Gastrocnemius medialis (tissue), 4 donors: ENCODE measurements at regions of chr1 and their contacts with region 1.

Region 1: GRCh38 chr1:8848663-8849386 is 29.7 kb downstream of the ENO1 start:
- DNase-seq: peak; percentile 89 to 97
- ATAC-seq: peak; percentile 92 to 96
- H3K4me3 ChIP-seq: no peak overlapping the region
- H3K27ac ChIP-seq: peak overlapping the region; percentile 73 to 85 (median 80)
- H3K4me1 ChIP-seq: peaks cover 24 to 29% of the 10 kb centered on the region in 2 donors
- H3K27me3 ChIP-seq: no peaks in the 10 kb centered on the region
- CTCF ChIP-seq: peak; percentile 92 to 98 (median 96)
- POLR2A ChIP-seq: peak in 1 of 2 donors; percentile 23

Region 2: DNA sequence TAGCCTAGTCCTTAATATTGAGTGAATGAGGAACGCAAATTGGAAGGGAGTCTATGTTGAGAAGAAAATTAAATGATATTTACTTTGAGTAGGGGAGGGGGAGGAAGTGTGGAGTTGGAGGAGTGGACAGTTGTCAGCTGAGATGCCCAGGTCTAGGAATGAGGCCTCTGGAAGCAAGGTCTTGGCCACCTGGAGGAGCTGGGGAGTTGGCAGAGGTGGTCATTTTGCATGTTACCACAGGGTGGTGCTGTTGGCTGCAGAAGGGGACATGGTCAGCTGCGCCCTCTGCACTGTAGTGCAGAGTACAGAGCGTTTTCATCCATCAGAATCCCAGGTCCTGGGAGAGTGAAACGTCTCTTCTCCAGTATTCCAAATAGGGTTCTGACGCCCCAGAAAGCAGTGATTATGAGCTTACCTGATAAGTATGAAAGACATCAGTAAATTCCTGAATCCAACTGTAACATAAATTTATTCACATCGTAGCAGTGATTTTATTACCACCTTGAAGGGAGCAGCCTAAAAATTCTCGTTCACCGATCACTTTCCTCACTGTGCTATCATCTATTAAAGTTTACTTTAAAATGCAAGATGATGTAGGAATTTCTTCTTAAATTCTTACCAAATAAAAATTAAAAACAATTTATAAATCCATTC is 873.5 kb before region 1 on chr1:
- in situ Hi-C with region 1: no loop called
- intact Hi-C with region 1: loop called (anchors 2 kb)
- DNase-seq: peak; percentile 61 to 77
- ATAC-seq: peak; percentile 91 to 98
- H3K4me3 ChIP-seq: no peak overlapping the region
- H3K27ac ChIP-seq: peak overlapping the region; percentile 51 to 85 (median 68)
- H3K4me1 ChIP-seq: peaks cover 17 to 30% of the 10 kb centered on the region in 2 donors
- H3K27me3 ChIP-seq: no peaks in the 10 kb centered on the region
- CTCF ChIP-seq: peak; percentile 82 to 92 (median 88)
- POLR2A ChIP-seq: no peak

Region 3: DNA sequence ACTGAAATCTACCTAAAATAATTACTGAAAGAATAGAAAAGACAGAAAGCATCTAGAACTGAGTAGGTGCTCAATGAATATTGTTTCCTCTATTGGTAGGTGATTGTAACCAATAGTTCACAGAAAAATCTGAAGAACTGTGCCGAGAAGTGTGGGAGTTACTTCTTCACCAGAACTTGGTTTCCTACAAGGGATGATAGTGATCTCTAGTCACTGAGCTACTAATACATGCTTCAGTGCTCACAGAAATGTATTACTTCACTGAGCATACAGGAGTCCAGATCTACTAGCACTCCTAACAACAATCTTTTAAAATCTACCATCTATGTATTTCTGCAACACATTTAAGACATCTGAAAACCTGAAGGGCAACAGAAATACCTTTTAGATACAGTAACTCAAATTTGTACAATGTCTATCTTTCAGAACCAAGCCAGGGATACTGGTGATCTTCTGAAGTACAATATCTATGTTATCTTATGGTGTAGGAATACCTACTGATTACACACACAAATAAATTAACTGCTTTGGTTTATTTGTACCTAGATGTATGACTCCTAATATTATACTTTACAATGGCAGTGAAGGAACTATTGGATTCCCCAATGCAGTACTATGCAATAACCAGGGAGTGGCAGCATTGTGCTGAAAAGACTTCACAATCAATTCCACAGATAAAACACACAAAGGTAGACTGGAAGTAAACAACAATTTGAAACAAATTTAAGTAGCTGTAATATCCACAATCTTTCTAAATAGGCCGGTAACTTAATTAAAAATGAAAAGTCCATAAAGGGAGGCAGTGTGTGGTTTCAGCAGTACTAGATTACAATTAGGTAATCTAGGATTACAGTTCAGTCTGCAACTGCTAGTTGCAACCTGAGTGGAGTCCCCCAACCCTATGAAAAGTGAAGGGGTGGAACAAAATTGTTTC is 287.9 kb before region 1 on chr1:
- in situ Hi-C with region 1: loop called in 3 of 4 experiments (anchors 5 to 10 kb)
- intact Hi-C with region 1: loop called (anchors 1 kb)
- DNase-seq: no peak
- ATAC-seq: peak; percentile 76 to 84
- H3K4me3 ChIP-seq: no peak overlapping the region
- H3K27ac ChIP-seq: peak overlapping the region in 1 of 4 donors; percentile 8
- H3K4me1 ChIP-seq: peaks cover 4 to 20% of the 10 kb centered on the region in 2 donors
- H3K27me3 ChIP-seq: no peaks in the 10 kb centered on the region
- CTCF ChIP-seq: peak; percentile 89 to 98 (median 91)
- POLR2A ChIP-seq: no peak

Region 4: DNA sequence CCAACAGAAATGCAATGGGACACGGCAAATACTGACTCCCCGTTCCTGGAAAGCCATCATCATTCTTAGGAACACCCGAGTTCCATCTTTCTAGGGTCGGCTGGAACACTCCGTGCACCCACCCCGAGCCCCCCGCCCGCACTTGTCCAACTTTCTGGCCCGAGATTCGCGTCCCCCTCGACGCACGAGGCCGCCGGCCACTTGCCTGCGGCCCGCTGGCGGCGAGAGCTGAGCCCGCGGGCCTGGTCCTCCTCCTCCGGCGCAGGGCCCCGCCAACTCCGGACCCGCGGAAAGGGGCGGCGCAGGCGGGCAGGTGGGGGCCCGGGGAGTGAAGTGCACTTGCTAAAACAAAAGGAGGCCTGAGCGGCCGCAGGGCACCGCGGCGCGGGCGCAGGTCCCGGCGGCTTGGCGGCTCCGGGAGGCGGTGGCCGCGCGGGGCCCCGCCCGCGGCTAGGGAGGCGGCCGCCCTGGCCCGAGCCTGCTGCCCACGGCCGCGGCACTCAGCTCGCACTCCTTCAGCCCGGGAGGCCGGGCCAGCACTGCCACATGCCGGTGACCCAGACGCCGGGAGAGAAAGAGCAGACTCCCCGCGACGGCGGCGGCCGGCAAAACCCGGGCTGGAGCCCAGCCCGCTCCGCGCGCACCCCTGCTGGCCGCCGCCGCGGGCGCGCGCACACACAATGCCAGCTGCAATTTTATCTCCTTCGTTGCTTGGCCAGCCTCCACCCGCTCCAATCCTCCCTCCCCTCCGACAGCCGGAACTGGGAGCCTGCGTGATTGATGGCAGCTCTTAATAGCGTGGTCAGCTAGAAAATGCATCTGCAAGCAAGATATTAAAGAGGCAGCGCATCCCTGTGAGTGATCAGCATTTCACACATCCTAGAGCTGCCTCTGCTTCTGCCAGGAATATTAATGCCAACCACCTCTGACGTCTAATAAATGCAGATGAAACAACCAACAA is 145.7 kb before region 1 on chr1:
- in situ Hi-C with region 1: loop called in 1 of 4 experiments (anchors 25 kb)
- intact Hi-C with region 1: no loop called
- DNase-seq: peak; percentile 85 to 92
- ATAC-seq: peak; percentile 85
- H3K4me3 ChIP-seq: peak overlapping the region; percentile 62 to 70 (median 66)
- H3K27ac ChIP-seq: peak overlapping the region; percentile 85 to 92 (median 88)
- H3K4me1 ChIP-seq: peaks cover 47 to 58% of the 10 kb centered on the region in 2 donors
- H3K27me3 ChIP-seq: no peaks in the 10 kb centered on the region
- CTCF ChIP-seq: peak in 3 of 5 experiments; percentile 27 to 59 (median 32)
- POLR2A ChIP-seq: peak; percentile 87

Region 5: DNA sequence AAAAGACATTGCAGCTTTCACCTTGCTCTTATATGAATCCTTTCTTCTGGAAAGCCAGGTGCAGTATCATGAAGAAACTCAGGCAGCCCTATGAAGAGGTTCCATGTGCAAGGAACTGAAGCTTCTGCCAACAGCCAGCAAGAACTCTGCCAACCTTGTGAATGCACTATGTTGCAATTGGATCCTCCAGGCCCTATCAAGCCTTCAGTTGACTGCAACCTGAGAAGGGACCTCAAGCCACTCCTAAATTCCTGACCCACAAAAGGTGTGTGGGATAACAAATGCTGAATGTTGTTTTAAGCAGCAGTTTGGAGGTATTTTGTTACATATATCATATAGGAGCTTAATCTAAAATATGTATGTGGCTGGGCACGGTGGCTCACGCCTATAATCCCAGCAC is 115.4 kb before region 1 on chr1:
- in situ Hi-C with region 1: no loop called
- intact Hi-C with region 1: loop called (anchors 5 kb)
- DNase-seq: peak; percentile 79 to 90
- ATAC-seq: peak; percentile 100
- H3K4me3 ChIP-seq: no peak overlapping the region
- H3K27ac ChIP-seq: peak overlapping the region; percentile 58 to 76 (median 70)
- H3K4me1 ChIP-seq: peaks cover 18 to 21% of the 10 kb centered on the region in 2 donors
- H3K27me3 ChIP-seq: no peaks in the 10 kb centered on the region
- CTCF ChIP-seq: no peak
- POLR2A ChIP-seq: no peak

Region 6: GRCh38 chr1:8817406-8818324 is 31.2 kb before region 1 on chr1 and contains the start of gene RERE:
- in situ Hi-C with region 1: no loop called
- intact Hi-C with region 1: loop called (anchors 2 kb)
- DNase-seq: peak; percentile 86 to 95
- ATAC-seq: peak; percentile 91 to 92
- H3K4me3 ChIP-seq: peak within 1 kb of the TSS; percentile 82 to 96 (median 94)
- H3K27ac ChIP-seq: peak within 1 kb of the TSS; percentile 97 to 99 (median 98)
- H3K4me1 ChIP-seq: peaks cover 49 to 59% of the 10 kb centered on the region in 2 donors
- H3K27me3 ChIP-seq: no peaks in the 10 kb centered on the region
- CTCF ChIP-seq: peak in 3 of 5 experiments; percentile 8 to 27 (median 23)
- POLR2A ChIP-seq: peak; percentile 94 to 96
- total RNA-seq, gene RERE: 60.8 to 106 (median 102) TPM